Right lobe of liver (tissue), 6 donors: ENCODE measurements at regions of chr9 and their contacts with region 1.

Region 1: GRCh38 chr9:34493972-34494535 is 28.7 kb downstream of the ENHO start:
- DNase-seq: peak in 1 of 3 donors; percentile 49
- ATAC-seq: peak; percentile 61 to 76 (median 70)
- H3K4me3 ChIP-seq: no peak overlapping the region
- H3K27ac ChIP-seq: no peak overlapping the region
- H3K4me1 ChIP-seq: no peaks in the 10 kb centered on the region
- H3K27me3 ChIP-seq: no peaks in the 10 kb centered on the region
- CTCF ChIP-seq: no peak
- POLR2A ChIP-seq: no peak

Region 2: GRCh38 chr9:34403554-34404380 is 90.3 kb before region 1 on chr9:
- intact Hi-C with region 1: loop called in 1 of 2 experiments (anchors 5 kb)
- DNase-seq: peak; percentile 65 to 84 (median 74)
- ATAC-seq: peak; percentile 85 to 98 (median 92)
- H3K4me3 ChIP-seq: no peak overlapping the region
- H3K27ac ChIP-seq: no peak overlapping the region
- H3K4me1 ChIP-seq: no peaks in the 10 kb centered on the region
- H3K27me3 ChIP-seq: no peaks in the 10 kb centered on the region
- CTCF ChIP-seq: peak; percentile 97 to 99 (median 98)
- POLR2A ChIP-seq: no peak

Region 3: GRCh38 chr9:34446468-34446891 is 47.6 kb before region 1 on chr9:
- intact Hi-C with region 1: loop called in 1 of 2 experiments (anchors 10 kb)
- DNase-seq: no peak
- ATAC-seq: no peak
- H3K4me3 ChIP-seq: no peak overlapping the region
- H3K27ac ChIP-seq: no peak overlapping the region
- H3K4me1 ChIP-seq: no peaks in the 10 kb centered on the region
- H3K27me3 ChIP-seq: no peaks in the 10 kb centered on the region
- CTCF ChIP-seq: no peak
- POLR2A ChIP-seq: no peak

Region 4: GRCh38 chr9:34646211-34647083 is 152.4 kb after region 1 on chr9 and contains the start of gene GALT:
- intact Hi-C with region 1: no loop called
- DNase-seq: peak; percentile 95 to 98 (median 97)
- ATAC-seq: peak; percentile 65 to 78 (median 72)
- H3K4me3 ChIP-seq: peak within 1 kb of the TSS; percentile 64 to 95 (median 74)
- H3K27ac ChIP-seq: peak within 1 kb of the TSS; percentile 70 to 87 (median 83)
- H3K4me1 ChIP-seq: peaks cover 0 to 63% (median 24%) of the 10 kb centered on the region in 4 donors
- H3K27me3 ChIP-seq: no peaks in the 10 kb centered on the region
- CTCF ChIP-seq: peak; percentile 19 to 31 (median 22)
- POLR2A ChIP-seq: peak; percentile 73
- total RNA-seq, gene GALT: 58.2 to 157 (median 117) TPM